Calu3 (cell line): ENCODE measurements at regions of chr10 and their contacts with region 1.

Region 1: DNA sequence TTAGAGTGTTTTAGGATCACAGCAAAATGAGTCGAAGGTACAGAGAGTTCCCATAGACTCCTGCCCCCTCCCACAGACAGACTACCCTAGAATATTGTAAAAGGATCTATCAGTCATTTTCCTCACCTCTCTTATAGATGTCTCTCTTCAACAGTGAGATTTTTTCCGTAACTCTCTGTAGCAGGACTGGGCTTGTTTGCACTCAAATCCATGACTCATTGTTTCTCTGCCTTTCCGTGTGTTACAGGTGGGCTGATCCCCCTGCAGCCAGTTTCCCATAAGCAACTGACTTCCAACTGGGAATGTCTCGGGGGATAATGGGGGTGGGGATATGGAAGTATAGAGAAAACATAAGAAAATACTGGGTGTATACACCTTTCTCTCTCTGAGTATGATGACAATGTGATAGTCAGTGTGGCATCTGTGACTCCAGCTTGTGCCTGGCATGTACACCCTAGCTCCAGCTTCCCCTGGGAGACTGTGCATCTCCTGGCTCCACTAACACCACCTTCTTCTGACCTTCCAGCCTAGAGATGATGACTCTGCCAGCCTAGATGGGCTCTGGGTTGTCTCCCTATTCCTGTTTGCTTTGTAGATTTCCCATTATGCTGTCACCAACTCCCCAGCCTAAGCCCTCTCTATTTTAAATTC is 921.2 kb downstream of the GATA3 start:
- DNase-seq: no peak
- H3K4me3 Mint-ChIP-seq: no peak overlapping the region
- H3K27ac Mint-ChIP-seq: no peak overlapping the region
- H3K4me1 Mint-ChIP-seq: no peaks in the 10 kb centered on the region
- H3K27me3 Mint-ChIP-seq: no peaks in the 10 kb centered on the region
- CTCF ChIP-seq: no peak

Region 2: DNA sequence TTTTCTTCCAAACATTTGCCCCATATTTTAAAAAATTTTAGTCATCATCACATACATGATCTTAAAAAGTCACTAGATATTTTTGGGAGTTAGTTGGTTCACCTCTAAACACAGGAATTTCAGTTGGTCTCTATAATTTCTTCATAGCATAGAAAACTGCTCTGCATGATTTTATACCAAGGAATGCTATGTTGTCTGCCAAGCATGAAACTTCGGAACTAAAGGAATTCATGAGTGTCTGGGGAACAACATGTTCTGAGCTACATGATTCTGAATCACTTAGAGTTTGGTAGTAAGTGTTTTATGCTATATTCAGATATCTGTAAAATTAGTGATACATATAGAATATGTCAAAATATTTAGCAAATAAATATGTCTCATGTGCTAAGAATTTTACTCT is 36.7 kb after region 1 on chr10:
- CTCF ChIA-PET with region 1: no interaction called
- intact Hi-C with region 1: loop called (anchors 1 kb)
- DNase-seq: no peak
- H3K4me3 Mint-ChIP-seq: no peak overlapping the region
- H3K27ac Mint-ChIP-seq: no peak overlapping the region
- H3K4me1 Mint-ChIP-seq: no peaks in the 10 kb centered on the region
- H3K27me3 Mint-ChIP-seq: no peaks in the 10 kb centered on the region
- CTCF ChIP-seq: no peak

Region 3: GRCh38 chr10:9596368-9596920 is 620.8 kb after region 1 on chr10:
- CTCF ChIA-PET with region 1: no interaction called
- intact Hi-C with region 1: no loop called
- DNase-seq: no peak
- H3K4me3 Mint-ChIP-seq: no peak overlapping the region
- H3K27ac Mint-ChIP-seq: no peak overlapping the region
- H3K4me1 Mint-ChIP-seq: no peaks in the 10 kb centered on the region
- H3K27me3 Mint-ChIP-seq: no peaks in the 10 kb centered on the region
- CTCF ChIP-seq: no peak